ENCODE measurements at regions of chr1 and their contacts with region 1.

Region 1: GRCh38 chr1:203172128-203173010 is 3.3 kb downstream of the MYBPH start:
- DNase-seq: peak; percentile 89
- H3K4me3 Mint-ChIP-seq: no peak overlapping the region
- H3K27ac Mint-ChIP-seq: no peak overlapping the region
- H3K4me1 Mint-ChIP-seq: peaks cover 2% of the 10 kb centered on the region
- H3K27me3 Mint-ChIP-seq: peaks cover 18% of the 10 kb centered on the region
- CTCF ChIP-seq: peak; percentile 100

Region 2: DNA sequence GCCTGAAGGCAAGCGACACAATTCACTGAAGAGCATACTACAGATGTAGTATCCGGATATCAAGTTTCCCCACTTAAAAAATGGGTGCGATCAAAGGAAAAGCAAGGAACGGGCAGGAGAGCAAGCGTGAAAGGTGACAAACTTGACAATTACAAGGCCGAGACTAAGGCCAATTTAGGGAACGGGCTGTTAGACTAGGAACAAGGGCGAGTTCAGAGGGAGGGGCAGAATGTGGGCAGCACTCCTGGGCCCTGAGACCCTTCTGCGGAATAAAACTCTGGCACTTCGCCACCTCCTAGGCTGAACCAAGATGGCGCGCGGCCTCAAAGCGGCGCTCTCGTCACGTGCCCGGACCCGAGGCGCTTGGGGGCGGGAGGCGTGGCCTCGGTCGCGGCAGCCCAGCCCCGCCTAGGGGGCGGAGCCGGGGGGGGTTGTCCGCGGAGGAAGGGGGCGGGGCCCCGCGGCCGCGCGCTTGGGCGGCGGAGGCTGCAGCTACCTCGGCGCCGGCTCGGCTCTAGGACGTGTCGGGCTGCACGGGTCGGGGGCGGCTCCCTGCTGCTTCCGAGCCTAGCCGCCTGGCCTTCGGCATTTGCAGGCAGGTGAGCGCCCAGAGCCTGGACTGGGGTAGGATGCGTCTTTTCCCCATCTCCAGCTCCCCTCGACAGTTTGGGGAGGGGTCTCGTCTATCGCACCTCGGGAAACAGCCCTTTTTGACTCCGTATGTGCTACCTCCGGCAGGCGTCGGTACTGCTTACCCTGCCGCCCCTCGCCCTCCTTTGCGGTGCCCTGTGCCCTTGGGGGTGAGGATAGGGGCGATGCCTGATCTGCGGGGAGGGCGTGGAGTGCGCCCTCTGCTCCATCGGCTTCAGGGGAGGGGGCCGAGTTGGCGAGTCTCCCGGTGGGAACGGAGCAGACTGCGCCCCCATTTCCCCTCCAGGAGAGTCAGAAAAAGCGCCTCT is 146.1 kb before region 1 on chr1 and contains the start of gene PPFIA4:
- CTCF ChIA-PET with region 1: interaction called, 11 read pairs
- POLR2A ChIA-PET with region 1: no interaction called
- intact Hi-C with region 1: no loop called
- DNase-seq: peak; percentile 93
- H3K4me3 Mint-ChIP-seq: peak within 1 kb of the TSS; percentile 68
- H3K27ac Mint-ChIP-seq: peak within 1 kb of the TSS; percentile 63
- H3K4me1 Mint-ChIP-seq: peaks cover 8% of the 10 kb centered on the region
- H3K27me3 Mint-ChIP-seq: peaks cover 11% of the 10 kb centered on the region
- CTCF ChIP-seq: no peak
- total RNA-seq, gene PPFIA4: 0.16 and 0.49 TPM in 2 replicates

Region 3: GRCh38 chr1:203101915-203102634 is 70.3 kb before region 1 on chr1:
- CTCF ChIA-PET with region 1: interaction called, 12 read pairs
- POLR2A ChIA-PET with region 1: no interaction called
- intact Hi-C with region 1: no loop called
- DNase-seq: no peak
- H3K4me3 Mint-ChIP-seq: no peak overlapping the region
- H3K27ac Mint-ChIP-seq: no peak overlapping the region
- H3K4me1 Mint-ChIP-seq: no peaks in the 10 kb centered on the region
- H3K27me3 Mint-ChIP-seq: peaks cover 22% of the 10 kb centered on the region
- CTCF ChIP-seq: no peak

Region 4: GRCh38 chr1:203117611-203118575 is 54.5 kb before region 1 on chr1:
- CTCF ChIA-PET with region 1: interaction called, 89 read pairs
- POLR2A ChIA-PET with region 1: no interaction called
- intact Hi-C with region 1: loop called (anchors 1 kb)
- DNase-seq: peak; percentile 85
- H3K4me3 Mint-ChIP-seq: no peak overlapping the region
- H3K27ac Mint-ChIP-seq: no peak overlapping the region
- H3K4me1 Mint-ChIP-seq: peaks cover 10% of the 10 kb centered on the region
- H3K27me3 Mint-ChIP-seq: peaks cover 42% of the 10 kb centered on the region
- CTCF ChIP-seq: peak; percentile 99

Region 5: DNA sequence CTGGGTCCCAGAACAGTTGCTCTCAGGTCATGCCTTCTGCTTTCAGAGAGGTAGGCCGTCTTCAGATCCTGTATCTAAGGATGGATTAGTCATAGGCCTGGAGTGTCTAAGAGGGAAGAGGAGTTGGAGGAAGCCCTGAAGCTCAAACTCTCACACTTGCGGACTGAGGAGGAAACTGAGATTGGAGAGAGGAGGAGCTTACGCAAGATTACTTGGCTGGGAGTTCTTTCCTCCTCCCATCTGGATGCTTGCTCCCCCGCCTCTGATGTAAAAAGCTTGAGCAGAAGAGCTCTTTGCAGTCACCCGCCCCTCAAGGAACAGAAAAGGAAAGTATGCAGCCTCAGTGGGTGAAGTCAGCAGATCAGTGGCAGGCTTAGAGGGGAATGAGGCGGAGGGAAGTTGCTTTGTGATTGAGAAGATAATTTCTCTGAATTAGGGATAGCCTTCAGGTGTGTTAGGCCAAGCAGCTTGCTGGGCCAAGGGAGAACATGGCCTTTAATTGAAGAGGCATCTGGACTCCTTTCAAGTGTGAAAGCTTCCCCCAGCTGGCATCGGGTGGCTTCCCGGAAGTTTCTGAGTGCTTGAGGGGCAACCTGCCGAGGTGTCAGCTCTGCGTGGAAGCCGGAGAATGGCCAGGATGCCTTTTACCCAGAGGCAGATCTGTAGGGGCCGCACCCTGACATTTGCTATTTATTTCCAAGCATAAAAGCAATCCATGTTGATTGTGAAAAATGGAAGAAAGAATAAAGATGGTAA is 38.2 kb before region 1 on chr1:
- CTCF ChIA-PET with region 1: interaction called, 19 read pairs
- POLR2A ChIA-PET with region 1: no interaction called
- intact Hi-C with region 1: no loop called
- DNase-seq: peak; percentile 89
- H3K4me3 Mint-ChIP-seq: no peak overlapping the region
- H3K27ac Mint-ChIP-seq: no peak overlapping the region
- H3K4me1 Mint-ChIP-seq: peaks cover 17% of the 10 kb centered on the region
- H3K27me3 Mint-ChIP-seq: no peaks in the 10 kb centered on the region
- CTCF ChIP-seq: no peak

Region 6: DNA sequence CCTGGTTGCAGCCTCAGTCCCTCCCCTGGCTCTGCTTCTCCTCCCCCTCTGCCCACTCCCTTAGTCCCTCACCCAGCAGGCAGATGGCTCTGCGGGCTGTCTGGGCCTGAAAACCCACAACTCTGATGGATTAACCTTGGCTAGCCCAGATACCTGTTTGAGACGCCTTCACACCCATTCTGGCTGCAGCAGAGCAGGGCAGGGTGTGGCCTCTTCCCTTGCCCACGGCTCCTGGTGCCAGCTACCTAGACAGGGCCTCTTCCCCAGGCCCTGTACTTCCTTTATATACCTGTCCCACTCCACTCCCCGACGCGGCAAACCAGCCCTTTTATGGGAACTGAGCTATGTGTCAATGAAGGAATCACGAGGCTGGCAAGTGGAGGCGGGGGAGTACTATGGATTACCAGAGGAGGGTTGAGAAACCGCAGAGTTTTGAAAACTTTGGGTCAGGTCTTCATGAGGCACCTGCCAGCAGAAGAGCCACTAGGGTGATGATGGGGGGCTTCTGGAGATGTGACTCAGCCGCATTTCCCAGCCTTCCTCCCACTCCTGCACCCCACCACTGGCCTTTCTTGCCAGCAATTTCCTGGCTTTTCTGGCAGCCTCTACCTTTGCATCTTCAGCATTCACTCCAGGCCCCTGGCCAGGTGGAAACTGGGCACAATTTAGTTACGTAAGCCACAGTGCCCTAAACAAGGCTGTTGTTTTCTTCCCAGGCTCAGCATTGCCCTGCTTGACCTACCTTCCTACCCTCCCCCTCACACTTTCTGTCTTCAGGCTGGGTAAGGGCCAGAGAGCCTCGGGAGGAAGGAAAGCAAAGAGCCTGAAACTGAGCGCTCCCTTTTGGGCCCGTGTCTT is 14.3 kb after region 1 on chr1 and contains the start of gene CHI3L1:
- CTCF ChIA-PET with region 1: interaction called, 47 read pairs
- POLR2A ChIA-PET with region 1: interaction called, 3 read pairs
- intact Hi-C with region 1: no loop called
- DNase-seq: peak; percentile 97
- H3K4me3 Mint-ChIP-seq: no peak within 1 kb of the TSS
- H3K27ac Mint-ChIP-seq: no peak within 1 kb of the TSS
- H3K4me1 Mint-ChIP-seq: peaks cover 13% of the 10 kb centered on the region
- H3K27me3 Mint-ChIP-seq: peaks cover 33% of the 10 kb centered on the region
- CTCF ChIP-seq: no peak
- total RNA-seq, gene CHI3L1: 0.75 and 0.88 TPM in 2 replicates

Region 7: GRCh38 chr1:203216274-203217138 is 44.1 kb after region 1 on chr1:
- CTCF ChIA-PET with region 1: interaction called, 113 read pairs
- POLR2A ChIA-PET with region 1: interaction called, 5 read pairs
- intact Hi-C with region 1: loop called (anchors 1 kb)
- DNase-seq: peak; percentile 89
- H3K4me3 Mint-ChIP-seq: no peak overlapping the region
- H3K27ac Mint-ChIP-seq: no peak overlapping the region
- H3K4me1 Mint-ChIP-seq: no peaks in the 10 kb centered on the region
- H3K27me3 Mint-ChIP-seq: peaks cover 33% of the 10 kb centered on the region
- CTCF ChIP-seq: peak; percentile 93

Region 8: GRCh38 chr1:203390298-203390697 is 217.9 kb after region 1 on chr1:
- CTCF ChIA-PET with region 1: no interaction called
- POLR2A ChIA-PET with region 1: no interaction called
- intact Hi-C with region 1: no loop called
- DNase-seq: no peak
- H3K4me3 Mint-ChIP-seq: no peak overlapping the region
- H3K27ac Mint-ChIP-seq: no peak overlapping the region
- H3K4me1 Mint-ChIP-seq: no peaks in the 10 kb centered on the region
- H3K27me3 Mint-ChIP-seq: peaks cover 67% of the 10 kb centered on the region
- CTCF ChIP-seq: no peak